Heart right ventricle (tissue), 16 donors: ENCODE measurements at regions of chr3 and their contacts with region 1.

Region 1: DNA sequence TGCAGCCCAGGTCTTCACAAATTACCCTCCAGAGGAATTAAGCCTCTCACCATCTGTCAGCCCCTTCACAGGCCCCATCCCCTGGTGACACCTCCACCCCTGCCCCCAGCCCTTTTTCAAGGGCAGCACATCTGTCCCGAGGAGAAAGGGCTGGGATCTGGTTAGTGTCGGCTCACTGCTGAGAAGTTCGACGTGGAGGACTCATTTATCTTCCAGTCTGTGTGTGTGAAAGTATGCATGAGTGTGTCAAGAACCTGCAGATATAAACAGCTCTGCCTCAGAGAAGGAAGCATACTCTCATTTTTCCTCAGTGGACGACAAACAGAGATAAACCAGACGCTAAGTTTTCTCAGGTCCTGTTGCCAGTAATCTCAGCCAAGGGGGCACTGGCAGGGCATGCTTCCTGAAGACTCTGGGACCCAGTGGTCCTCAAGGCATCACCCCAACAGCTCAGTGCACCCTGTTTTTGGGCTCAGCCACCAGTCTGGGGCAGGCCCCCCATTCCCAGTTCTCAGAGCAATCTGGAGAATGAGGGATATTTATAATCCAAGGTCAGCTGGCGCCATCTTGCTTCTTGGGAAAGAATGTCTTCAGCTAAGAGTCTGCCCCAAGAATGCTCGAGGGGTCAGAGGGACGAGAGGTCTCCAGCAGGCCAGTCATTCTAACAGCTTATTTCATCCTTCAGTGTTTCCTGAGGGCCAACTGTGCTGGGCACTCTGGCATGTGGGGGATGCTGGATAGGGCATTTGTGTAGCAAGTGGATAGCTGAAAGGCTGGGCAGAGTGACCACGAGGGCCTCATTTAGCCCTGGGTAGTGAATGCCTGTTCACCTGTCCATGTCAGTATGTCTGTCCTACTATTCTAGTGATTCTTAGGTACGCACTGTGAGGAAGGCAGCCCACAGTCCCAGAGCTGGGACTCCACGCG is 73.6 kb downstream of the ADCY5 start:
- DNase-seq: peak in 1 of 2 donors; percentile 48
- ATAC-seq: peak in 7 of 8 donors; percentile 9 to 64 (median 50)
- H3K4me3 ChIP-seq: no peak overlapping the region
- H3K27ac ChIP-seq: peak overlapping the region; percentile 47 to 95 (median 84)
- H3K4me1 ChIP-seq: peaks cover 20 to 97% (median 77%) of the 10 kb centered on the region in 9 donors
- H3K27me3 ChIP-seq: no peaks in the 10 kb centered on the region
- CTCF ChIP-seq: peak in 1 of 9 donors; percentile 17

Region 2: GRCh38 chr3:123335007-123335670 is 40.1 kb before region 1 on chr3:
- intact Hi-C with region 1: loop called in 3 of 10 experiments (anchors 5 kb)
- DNase-seq: no peak
- ATAC-seq: peak in 6 of 8 donors; percentile 4 to 41 (median 19)
- H3K4me3 ChIP-seq: peak overlapping the region in 7 of 10 donors; percentile 17 to 38 (median 22)
- H3K27ac ChIP-seq: peak overlapping the region; percentile 32 to 96 (median 88)
- H3K4me1 ChIP-seq: peaks cover 15 to 93% (median 65%) of the 10 kb centered on the region in 9 donors
- H3K27me3 ChIP-seq: no peaks in the 10 kb centered on the region
- CTCF ChIP-seq: no peak

Region 3: GRCh38 chr3:123344175-123344906 is 30.9 kb before region 1 on chr3:
- intact Hi-C with region 1: loop called in 3 of 10 experiments (anchors 5 kb)
- DNase-seq: no peak
- ATAC-seq: peak in 5 of 8 donors; percentile 10 to 32 (median 22)
- H3K4me3 ChIP-seq: no peak overlapping the region
- H3K27ac ChIP-seq: peak overlapping the region; percentile 31 to 96 (median 77)
- H3K4me1 ChIP-seq: peaks cover 28 to 99% (median 77%) of the 10 kb centered on the region in 9 donors
- H3K27me3 ChIP-seq: peaks cover 0 to 4% (median 0%) of the 10 kb centered on the region in 7 donors
- CTCF ChIP-seq: no peak

Region 4: GRCh38 chr3:123352134-123352890 is 23.0 kb before region 1 on chr3:
- intact Hi-C with region 1: loop called in 1 of 10 experiments (anchors 2 kb)
- DNase-seq: peak; percentile 53 to 68
- ATAC-seq: peak; percentile 52 to 87 (median 72)
- H3K4me3 ChIP-seq: no peak overlapping the region
- H3K27ac ChIP-seq: peak overlapping the region in 9 of 10 donors; percentile 41 to 96 (median 70)
- H3K4me1 ChIP-seq: peaks cover 4 to 80% (median 60%) of the 10 kb centered on the region in 9 donors
- H3K27me3 ChIP-seq: peaks cover 0 to 4% (median 0%) of the 10 kb centered on the region in 7 donors
- CTCF ChIP-seq: no peak

Region 5: DNA sequence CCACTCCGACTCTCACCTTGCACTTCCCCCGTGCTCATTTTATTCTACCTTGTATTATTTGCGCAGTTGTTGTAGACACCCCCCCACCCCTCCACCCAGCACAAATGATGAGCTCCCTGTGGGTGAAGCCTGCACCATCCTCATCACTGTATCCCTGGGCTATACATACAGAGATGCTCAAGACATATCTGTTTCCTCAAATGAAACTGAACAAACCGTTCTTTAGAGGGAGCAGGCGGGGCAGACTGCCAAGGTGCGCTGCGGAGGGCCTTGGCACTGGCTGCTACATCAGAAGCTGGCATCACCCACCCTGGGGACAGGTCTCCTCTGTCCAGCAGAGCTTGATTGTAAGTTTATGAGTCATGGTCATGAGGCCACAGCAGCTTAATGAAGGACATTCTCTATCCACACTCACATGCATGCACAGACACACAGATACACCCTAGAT is 44.6 kb after region 1 on chr3:
- intact Hi-C with region 1: loop called in 1 of 10 experiments (anchors 5 kb)
- DNase-seq: peak; percentile 71 to 81
- ATAC-seq: peak; percentile 21 to 80 (median 54)
- H3K4me3 ChIP-seq: no peak overlapping the region
- H3K27ac ChIP-seq: peak overlapping the region; percentile 47 to 88 (median 86)
- H3K4me1 ChIP-seq: peaks cover 32 to 99% (median 81%) of the 10 kb centered on the region in 9 donors
- H3K27me3 ChIP-seq: no peaks in the 10 kb centered on the region
- CTCF ChIP-seq: peak in 1 of 9 donors; percentile 0